Posterior cingulate gyrus (tissue), 11 donors: ENCODE measurements at regions of chr14 and their contacts with region 1.

Region 1: GRCh38 chr14:49852301-49853157 is at the start of gene NEMF:
- DNase-seq: peak; percentile 70 to 97 (median 88)

Region 2: DNA sequence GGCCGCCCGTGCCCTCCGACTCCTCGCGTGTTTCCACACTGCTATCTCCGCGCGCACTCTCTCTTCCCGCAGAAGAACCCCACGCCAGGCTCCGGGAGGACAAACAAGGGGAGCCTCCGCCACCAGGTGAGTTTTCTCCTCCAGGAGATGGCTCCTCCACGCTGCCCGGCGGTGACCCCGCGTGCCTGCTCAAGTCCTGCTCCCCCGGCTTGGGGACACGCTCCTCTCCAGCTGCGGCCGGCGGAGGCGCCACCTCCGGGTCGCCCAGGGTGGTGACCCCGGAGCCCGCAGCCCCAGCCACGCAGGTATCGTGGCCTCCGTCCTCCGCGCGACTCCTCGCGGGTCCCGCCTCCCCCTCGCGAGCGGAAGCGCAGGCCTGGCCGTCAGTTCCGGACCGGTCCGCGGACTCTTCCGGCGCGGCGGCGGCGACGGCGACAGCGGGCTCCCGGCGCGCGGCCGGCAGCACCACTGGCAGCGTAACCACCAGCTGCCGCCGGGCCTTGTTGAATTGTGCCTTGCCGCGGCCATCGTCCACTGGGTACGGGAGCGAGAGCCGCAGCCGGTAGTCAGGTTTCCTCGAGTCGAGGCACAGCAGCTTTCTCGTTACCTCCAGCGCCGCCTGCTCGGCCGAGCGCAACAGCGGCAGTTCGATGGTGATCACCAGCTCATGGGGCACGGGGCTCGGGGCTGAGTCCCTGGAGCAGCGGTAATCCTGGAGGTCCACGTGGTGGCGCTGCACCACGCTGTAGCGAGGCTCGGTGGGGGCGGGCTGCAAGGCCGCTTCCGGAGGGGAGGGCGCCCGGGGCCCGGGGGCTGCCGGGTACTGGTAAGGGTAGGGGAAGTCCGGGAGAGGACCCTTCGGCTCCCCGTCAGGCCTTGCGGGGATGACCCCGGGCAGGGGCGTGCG is 218.6 kb before region 1 on chr14:
- intact Hi-C with region 1: loop called (anchors 1 kb)
- DNase-seq: peak; percentile 87 to 99 (median 94)

Region 3: DNA sequence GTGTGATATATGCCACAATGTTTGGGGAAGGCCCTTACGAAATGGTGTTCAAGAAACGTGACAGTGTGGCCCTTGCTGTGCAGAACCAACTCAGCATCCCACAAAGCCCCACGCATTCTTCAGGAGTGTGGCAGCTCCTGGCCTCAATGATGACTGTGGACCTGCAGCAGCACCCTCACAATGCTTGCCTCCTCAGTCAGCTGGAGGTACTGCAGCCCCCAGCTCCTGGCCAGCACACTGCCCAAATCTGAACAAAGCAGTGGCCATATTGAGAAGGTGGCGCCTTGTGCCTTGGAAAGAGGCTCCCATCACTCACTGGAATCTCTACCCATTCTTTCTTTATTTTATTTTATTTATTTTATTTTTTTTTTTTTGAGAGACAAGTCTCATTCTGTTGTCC is 174.9 kb before region 1 on chr14:
- intact Hi-C with region 1: no loop called
- DNase-seq: no peak

Region 4: DNA sequence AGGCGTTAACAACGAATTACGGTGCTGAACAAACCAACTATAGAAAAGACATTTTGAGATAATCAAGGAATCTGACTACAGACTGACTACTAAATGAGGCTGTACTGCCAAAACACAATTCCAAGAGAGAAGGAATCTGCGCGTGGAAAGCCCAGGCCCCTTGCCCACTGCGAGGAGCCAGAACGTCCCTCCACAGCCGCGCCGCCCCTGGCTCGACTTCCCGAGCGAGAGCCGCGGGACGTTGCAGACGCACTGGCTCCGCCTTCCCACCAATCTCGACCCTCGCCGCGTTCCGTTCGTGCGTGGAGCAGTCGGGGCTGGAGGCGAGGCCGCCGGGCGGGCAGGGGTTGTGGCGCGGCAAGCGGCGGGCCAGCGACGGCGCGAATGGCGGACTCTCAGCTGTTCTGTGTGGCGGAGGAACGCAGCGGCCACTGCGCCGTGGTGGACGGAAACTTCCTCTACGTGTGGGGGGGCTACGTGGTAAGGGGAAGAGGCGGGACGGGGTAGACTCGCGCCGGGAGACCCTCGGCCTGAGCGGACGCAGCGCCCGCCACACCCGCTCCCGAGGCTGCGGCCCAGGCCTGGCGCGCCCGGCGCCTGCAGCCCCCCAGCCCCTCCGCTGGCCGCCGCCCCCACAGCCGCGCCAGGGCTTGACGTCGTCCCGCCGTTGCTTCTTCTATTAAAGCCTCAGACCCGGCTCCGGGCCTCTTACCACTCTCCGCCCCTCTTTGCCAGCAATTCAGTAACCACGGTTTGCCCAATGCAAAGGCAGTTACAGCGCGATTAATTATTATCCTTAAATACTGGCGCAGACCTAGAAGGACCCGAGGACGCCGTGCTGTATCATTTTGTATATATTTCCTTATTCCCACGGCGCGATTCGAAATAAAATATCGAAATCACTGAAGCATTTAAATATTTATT is 159.5 kb before region 1 on chr14 and contains the start of gene KLHDC1:
- intact Hi-C with region 1: loop called (anchors 5 kb)
- DNase-seq: peak; percentile 82 to 98 (median 90)

Region 5: GRCh38 chr14:49828640-49829039 is 23.9 kb before region 1 on chr14:
- intact Hi-C with region 1: loop called (anchors 1 kb)
- DNase-seq: no peak

Region 6: GRCh38 chr14:50109342-50109741 is 256.8 kb after region 1 on chr14:
- intact Hi-C with region 1: loop called (anchors 2 kb)
- DNase-seq: no peak